Activated naive CD8-positive, alpha-beta T cell treated with anti-CD3 and anti-CD28 coated beads, Interleukin-2, amount 10 ng/mL, durations not matched to agents 7 days and 5 days (primary cell): ENCODE measurements at regions of chr2 and their contacts with region 1.

Region 1: GRCh38 chr2:230712443-230713330 is at the start of gene CAB39:
- DNase-seq: peak; percentile 96
- ATAC-seq: peak; percentile 87
- H3K4me3 Mint-ChIP-seq: peak within 1 kb of the TSS; percentile 91
- H3K27ac Mint-ChIP-seq: peak within 1 kb of the TSS; percentile 95
- H3K4me1 Mint-ChIP-seq: peaks cover 32% of the 10 kb centered on the region
- H3K27me3 Mint-ChIP-seq: no peaks in the 10 kb centered on the region
- total RNA-seq, gene CAB39: 138 to 143 TPM

Region 2: DNA sequence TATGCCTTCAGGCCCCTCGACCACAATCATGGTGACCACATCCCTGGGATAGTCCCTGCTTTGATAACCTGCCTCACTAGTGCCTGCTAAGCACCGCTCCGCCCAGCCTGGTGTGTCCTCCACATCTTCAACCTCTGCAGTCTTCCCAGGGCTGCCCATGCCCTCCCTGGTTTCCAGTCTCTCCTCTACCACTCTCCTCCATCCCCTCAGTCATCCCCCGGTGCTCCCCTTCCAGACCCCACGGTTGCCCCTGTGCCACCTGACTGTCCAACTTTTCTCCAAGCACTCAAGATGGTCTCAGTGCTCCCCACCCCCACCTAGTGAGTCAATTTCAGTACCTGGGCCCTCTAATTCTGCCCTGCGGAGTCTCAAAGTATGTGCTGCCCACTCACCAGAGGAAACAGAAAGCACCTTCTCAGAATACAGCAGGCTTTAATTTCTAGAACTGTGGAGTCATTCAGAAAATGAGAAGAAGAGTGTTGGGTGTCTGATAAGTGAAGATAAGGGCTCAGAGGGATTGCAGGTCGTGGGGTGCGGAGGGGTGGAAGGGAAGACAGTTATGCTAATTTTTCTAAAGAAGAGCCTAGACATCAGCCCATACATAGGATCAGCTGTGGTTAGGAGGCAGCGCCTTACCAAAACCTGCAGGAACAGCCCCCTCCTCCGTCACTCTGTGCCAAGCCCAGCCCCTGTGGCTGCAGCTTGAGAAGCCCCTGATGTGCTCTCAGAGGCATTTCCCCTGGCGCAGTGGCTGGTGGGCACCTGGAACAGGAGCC is 53.6 kb before region 1 on chr2:
- POLR2A ChIA-PET with region 1: interaction called, 111 read pairs
- DNase-seq: peak; percentile 77
- ATAC-seq: peak; percentile 74
- H3K4me3 Mint-ChIP-seq: peak overlapping the region; percentile 93
- H3K27ac Mint-ChIP-seq: peak overlapping the region; percentile 98
- H3K4me1 Mint-ChIP-seq: peaks cover 72% of the 10 kb centered on the region
- H3K27me3 Mint-ChIP-seq: no peaks in the 10 kb centered on the region

Region 3: DNA sequence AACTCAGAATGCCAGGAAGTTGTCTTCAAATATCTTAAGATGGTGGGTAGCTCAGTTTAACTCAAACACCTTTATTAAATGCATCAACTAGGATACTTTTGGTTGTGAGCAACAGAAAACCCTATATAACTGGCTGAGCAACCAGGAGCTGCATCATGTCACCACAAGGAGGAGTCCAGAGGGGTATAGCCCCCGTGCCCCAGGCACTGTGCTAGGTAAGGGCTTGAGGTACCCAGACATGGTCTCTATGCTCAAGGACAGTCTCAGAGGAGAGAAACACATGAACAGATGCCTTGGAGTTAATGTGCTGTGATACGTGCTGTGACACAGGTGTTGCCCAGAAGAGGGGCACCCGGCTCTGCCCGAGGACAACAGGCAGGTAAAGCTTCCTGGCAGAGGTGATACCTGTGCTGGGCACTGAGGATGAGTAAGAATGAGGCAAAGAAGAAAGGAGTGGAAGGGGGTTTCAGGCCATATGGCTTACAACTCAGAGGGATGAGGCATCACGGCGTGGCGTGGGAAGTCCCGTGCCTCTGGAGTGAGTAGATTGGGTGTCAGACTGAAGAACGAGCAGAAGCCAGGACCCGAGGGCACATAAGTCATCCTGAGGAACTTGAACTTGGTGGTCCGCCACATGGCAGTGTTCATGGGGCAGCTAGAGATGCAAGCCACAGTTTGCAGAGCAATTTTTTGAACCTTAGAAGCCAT is 32.1 kb before region 1 on chr2:
- POLR2A ChIA-PET with region 1: interaction called, 29 read pairs
- DNase-seq: no peak
- ATAC-seq: no peak
- H3K4me3 Mint-ChIP-seq: no peak overlapping the region
- H3K27ac Mint-ChIP-seq: no peak overlapping the region
- H3K4me1 Mint-ChIP-seq: peaks cover 50% of the 10 kb centered on the region
- H3K27me3 Mint-ChIP-seq: no peaks in the 10 kb centered on the region

Region 4: DNA sequence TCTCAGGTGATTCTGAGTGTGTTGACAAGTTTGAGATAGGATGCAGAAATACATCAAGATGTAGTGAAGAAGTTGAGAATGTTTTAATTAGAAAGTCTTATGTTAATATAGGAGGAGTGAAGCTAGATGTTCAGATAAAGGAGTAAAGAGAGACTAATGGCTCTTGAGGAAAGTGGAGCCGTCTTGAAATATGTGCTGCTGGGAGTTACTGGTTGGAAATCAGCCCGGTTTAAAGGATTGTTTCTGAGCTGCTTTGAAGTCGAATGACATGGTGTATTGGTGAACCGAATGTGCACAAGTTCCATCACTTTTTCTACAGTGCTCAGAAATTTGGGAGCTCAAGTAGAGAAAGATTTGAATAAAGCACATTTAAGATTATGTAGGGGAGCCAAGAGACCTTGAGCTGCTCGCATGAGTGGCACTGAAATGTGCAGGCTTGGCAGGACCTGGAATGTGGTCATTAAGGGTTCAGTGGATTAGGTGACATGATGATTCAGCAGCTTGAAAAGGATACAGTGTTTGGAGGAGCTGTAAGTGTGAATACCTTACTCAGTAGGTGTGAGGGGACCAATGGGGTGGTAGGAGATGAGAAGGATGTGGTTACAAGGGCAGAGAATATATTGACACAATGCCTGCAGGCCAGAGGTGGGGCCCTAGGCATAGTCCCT is 68.6 kb after region 1 on chr2:
- POLR2A ChIA-PET with region 1: interaction called, 10 read pairs
- DNase-seq: no peak
- ATAC-seq: peak; percentile 92
- H3K4me3 Mint-ChIP-seq: peak overlapping the region; percentile 9
- H3K27ac Mint-ChIP-seq: peak overlapping the region; percentile 78
- H3K4me1 Mint-ChIP-seq: peaks cover 67% of the 10 kb centered on the region
- H3K27me3 Mint-ChIP-seq: no peaks in the 10 kb centered on the region